ENCODE measurements at regions of chr9 and their contacts with region 1.

Region 1: GRCh38 chr9:35812025-35812602 is at the start of gene SPAG8:
- DNase-seq: peak; percentile 97
- ATAC-seq: peak; percentile 71
- H3K4me3 Mint-ChIP-seq: peak within 1 kb of the TSS; percentile 76
- H3K27ac Mint-ChIP-seq: peak within 1 kb of the TSS; percentile 89
- H3K4me1 Mint-ChIP-seq: peaks cover 32% of the 10 kb centered on the region
- H3K27me3 Mint-ChIP-seq: peaks cover 1% of the 10 kb centered on the region
- total RNA-seq, gene SPAG8: 3.4 to 4.6 TPM

Region 2: GRCh38 chr9:35801328-35802128 is 10.6 kb before region 1 on chr9:
- POLR2A ChIA-PET with region 1: interaction called, 11 read pairs
- DNase-seq: no peak
- ATAC-seq: no peak
- H3K4me3 Mint-ChIP-seq: no peak overlapping the region
- H3K27ac Mint-ChIP-seq: no peak overlapping the region
- H3K4me1 Mint-ChIP-seq: peaks cover 4% of the 10 kb centered on the region
- H3K27me3 Mint-ChIP-seq: no peaks in the 10 kb centered on the region

Measured in activated naive CD8-positive, alpha-beta T cell treated with anti-CD3 and anti-CD28 coated beads, Interleukin-2, amount 10 ng/mL, durations not matched to agents 7 days and 5 days (primary cell).